ENCODE measurements at regions of chr4 and their contacts with region 1.

Region 1: DNA sequence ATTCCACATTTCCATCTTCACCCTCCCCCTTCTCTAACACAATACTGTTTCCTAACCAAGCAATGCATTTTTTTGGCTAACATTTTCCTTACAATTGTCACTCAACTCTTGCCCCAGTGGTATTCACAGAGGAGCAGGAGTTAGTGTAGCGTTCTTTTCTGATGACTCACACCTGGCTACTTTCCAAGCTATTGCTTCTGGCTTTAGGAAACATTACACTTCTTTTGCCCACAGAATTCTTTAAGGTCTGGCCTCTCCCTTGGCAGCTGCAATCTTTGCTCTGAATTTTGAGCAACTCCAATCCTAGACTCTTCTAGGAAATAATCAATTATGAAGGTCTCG is 27.5 kb upstream of the PDGFC start:
- DNase-seq: peak in 1 of 3 donors; percentile 45
- ATAC-seq: peak; percentile 86 to 93 (median 93)
- H3K4me3 ChIP-seq: no peak overlapping the region
- H3K27ac ChIP-seq: no peak overlapping the region
- H3K4me1 ChIP-seq: peaks cover 0 to 11% (median 3%) of the 10 kb centered on the region in 4 donors
- H3K27me3 ChIP-seq: no peaks in the 10 kb centered on the region
- CTCF ChIP-seq: no peak
- POLR2A ChIP-seq: no peak

Region 2: GRCh38 chr4:157045507-157046127 is 46.5 kb after region 1 on chr4:
- intact Hi-C with region 1: loop called in 1 of 2 experiments (anchors 10 kb)
- DNase-seq: no peak
- ATAC-seq: peak; percentile 99 to 100 (median 100)
- H3K4me3 ChIP-seq: no peak overlapping the region
- H3K27ac ChIP-seq: no peak overlapping the region
- H3K4me1 ChIP-seq: no peaks in the 10 kb centered on the region
- H3K27me3 ChIP-seq: no peaks in the 10 kb centered on the region
- CTCF ChIP-seq: peak; percentile 75 to 88 (median 79)
- POLR2A ChIP-seq: no peak

Region 3: GRCh38 chr4:157271166-157271869 is 272.2 kb after region 1 on chr4:
- intact Hi-C with region 1: no loop called
- DNase-seq: no peak
- ATAC-seq: no peak
- H3K4me3 ChIP-seq: no peak overlapping the region
- H3K27ac ChIP-seq: no peak overlapping the region
- H3K4me1 ChIP-seq: no peaks in the 10 kb centered on the region
- H3K27me3 ChIP-seq: no peaks in the 10 kb centered on the region
- CTCF ChIP-seq: no peak
- POLR2A ChIP-seq: no peak

Measured in right lobe of liver (tissue), 6 donors.